GM12878 (cell line): ENCODE measurements at regions of chr4 and their contacts with region 1.

Region 1: GRCh38 chr4:139083956-139084803 is 68.6 kb downstream of the NOCT start:
- DNase-seq: peak; percentile 62
- ATAC-seq: peak; percentile 77
- H3K4me3 ChIP-seq: peak overlapping the region; percentile 77
- H3K27ac ChIP-seq: peak overlapping the region; percentile 97
- H3K4me1 ChIP-seq: no peaks in the 10 kb centered on the region
- H3K27me3 ChIP-seq: no peaks in the 10 kb centered on the region
- CTCF ChIP-seq: 0 out of 6 replicates have a peak, but pooled peaks of 2 of the 3 experiments have one; percentile 2 to 32
- EP300 ChIP-seq: no peak
- POLR2A ChIP-seq: peak; percentile 87
- RAD21 ChIP-seq: no peak

Region 2: GRCh38 chr4:138428611-138429010 is 655.6 kb before region 1 on chr4:
- CTCF ChIA-PET with region 1: no interaction called
- POLR2A ChIA-PET with region 1: no interaction called
- RAD21 ChIA-PET with region 1: no interaction called
- SMC1A ChIA-PET with region 1: no interaction called
- in situ Hi-C with region 1: no loop called
- intact Hi-C with region 1: no loop called
- DNase-seq: no peak
- ATAC-seq: no peak
- H3K4me3 ChIP-seq: no peak overlapping the region
- H3K27ac ChIP-seq: no peak overlapping the region
- H3K4me1 ChIP-seq: no peaks in the 10 kb centered on the region
- H3K27me3 ChIP-seq: no peaks in the 10 kb centered on the region
- CTCF ChIP-seq: no peak
- EP300 ChIP-seq: no peak
- POLR2A ChIP-seq: no peak
- RAD21 ChIP-seq: no peak

Region 3: GRCh38 chr4:139177868-139178611 is 93.9 kb after region 1 on chr4:
- CTCF ChIA-PET with region 1: no interaction called
- POLR2A ChIA-PET with region 1: no interaction called
- RAD21 ChIA-PET with region 1: no interaction called
- SMC1A ChIA-PET with region 1: interaction called, 3 read pairs
- in situ Hi-C with region 1: no loop called
- intact Hi-C with region 1: loop called (anchors 5 kb)
- DNase-seq: peak; percentile 48
- ATAC-seq: peak; percentile 74
- H3K4me3 ChIP-seq: peak overlapping the region; percentile 79
- H3K27ac ChIP-seq: peak overlapping the region; percentile 57
- H3K4me1 ChIP-seq: peaks cover 4% of the 10 kb centered on the region; the same call in 1 of the 2 replicates
- H3K27me3 ChIP-seq: peaks cover 2 to 3% of the 10 kb centered on the region in 2 experiments; a peak in 2 of 4 replicates
- CTCF ChIP-seq: no peak
- EP300 ChIP-seq: peak; percentile 13 to 32; a peak in 1 of 4 replicates
- POLR2A ChIP-seq: peak; percentile 81
- RAD21 ChIP-seq: no peak

Region 4: DNA sequence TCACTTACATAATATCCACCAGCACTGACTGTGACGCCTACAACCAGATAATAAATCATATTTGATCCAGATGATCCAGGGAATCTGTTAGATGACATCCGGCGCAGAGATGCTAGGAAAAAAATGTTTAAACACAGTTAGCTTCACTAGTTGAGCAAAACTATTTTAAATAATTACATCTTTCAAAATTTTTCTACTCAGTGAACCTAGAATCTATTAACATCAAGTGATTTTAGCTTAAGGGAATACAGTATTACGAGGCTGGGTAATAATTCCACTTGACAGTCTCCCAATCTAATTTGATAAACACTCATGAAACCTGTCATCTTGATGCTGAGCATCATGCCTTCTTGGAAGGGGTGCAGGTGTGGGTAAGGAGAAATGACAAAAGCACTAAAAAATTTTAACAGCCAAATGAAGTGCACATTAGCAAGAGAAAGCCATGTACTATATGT is 191.1 kb after region 1 on chr4:
- CTCF ChIA-PET with region 1: no interaction called
- POLR2A ChIA-PET with region 1: no interaction called
- RAD21 ChIA-PET with region 1: no interaction called
- SMC1A ChIA-PET with region 1: no interaction called
- in situ Hi-C with region 1: no loop called
- intact Hi-C with region 1: no loop called
- DNase-seq: no peak
- ATAC-seq: no peak
- H3K4me3 ChIP-seq: no peak overlapping the region
- H3K27ac ChIP-seq: no peak overlapping the region
- H3K4me1 ChIP-seq: no peaks in the 10 kb centered on the region
- H3K27me3 ChIP-seq: peaks cover 8 to 15% of the 10 kb centered on the region in 2 experiments
- CTCF ChIP-seq: no peak
- EP300 ChIP-seq: no peak
- POLR2A ChIP-seq: no peak
- RAD21 ChIP-seq: no peak

Region 5: GRCh38 chr4:139453371-139454110 is 369.4 kb after region 1 on chr4:
- CTCF ChIA-PET with region 1: no interaction called
- POLR2A ChIA-PET with region 1: no interaction called
- RAD21 ChIA-PET with region 1: no interaction called
- SMC1A ChIA-PET with region 1: no interaction called
- in situ Hi-C with region 1: no loop called
- intact Hi-C with region 1: loop called (anchors 5 kb)
- DNase-seq: peak; percentile 90
- ATAC-seq: peak; percentile 91
- H3K4me3 ChIP-seq: peak overlapping the region; percentile 82
- H3K27ac ChIP-seq: peak overlapping the region; percentile 78
- H3K4me1 ChIP-seq: peaks cover 12% of the 10 kb centered on the region
- H3K27me3 ChIP-seq: no peaks in the 10 kb centered on the region
- CTCF ChIP-seq: peak in 1 of 3 experiments; percentile 0; a peak in 1 of 6 replicates
- EP300 ChIP-seq: no peak; a peak in 1 of 4 replicates
- POLR2A ChIP-seq: peak; percentile 91
- RAD21 ChIP-seq: no peak